ENCODE measurements at regions of chr3 and their contacts with region 1.

Region 1: DNA sequence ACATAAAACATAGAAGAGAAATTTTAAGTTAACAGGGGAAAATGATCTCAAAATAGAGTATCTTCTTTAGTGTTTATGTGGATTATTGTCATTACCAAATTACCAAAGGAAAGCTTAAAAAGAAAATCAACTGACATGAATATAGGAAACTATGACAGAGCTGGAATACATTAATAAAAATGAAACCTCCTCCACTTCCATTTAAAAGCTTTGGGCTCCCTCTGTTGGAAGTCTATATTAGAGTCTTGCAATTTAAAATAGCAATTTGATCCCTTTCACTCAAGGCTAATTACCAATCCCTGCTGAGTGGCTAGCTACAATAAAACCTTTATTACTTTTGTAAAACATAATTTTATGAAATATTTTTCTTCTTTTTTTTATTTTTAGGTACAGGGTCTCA is 61.4 kb upstream of the IMPG2 start:
- DNase-seq: no peak
- H3K4me3 Mint-ChIP-seq: no peak overlapping the region
- H3K27ac Mint-ChIP-seq: no peak overlapping the region
- H3K4me1 Mint-ChIP-seq: peaks cover 59% of the 10 kb centered on the region
- H3K27me3 Mint-ChIP-seq: no peaks in the 10 kb centered on the region

Region 2: DNA sequence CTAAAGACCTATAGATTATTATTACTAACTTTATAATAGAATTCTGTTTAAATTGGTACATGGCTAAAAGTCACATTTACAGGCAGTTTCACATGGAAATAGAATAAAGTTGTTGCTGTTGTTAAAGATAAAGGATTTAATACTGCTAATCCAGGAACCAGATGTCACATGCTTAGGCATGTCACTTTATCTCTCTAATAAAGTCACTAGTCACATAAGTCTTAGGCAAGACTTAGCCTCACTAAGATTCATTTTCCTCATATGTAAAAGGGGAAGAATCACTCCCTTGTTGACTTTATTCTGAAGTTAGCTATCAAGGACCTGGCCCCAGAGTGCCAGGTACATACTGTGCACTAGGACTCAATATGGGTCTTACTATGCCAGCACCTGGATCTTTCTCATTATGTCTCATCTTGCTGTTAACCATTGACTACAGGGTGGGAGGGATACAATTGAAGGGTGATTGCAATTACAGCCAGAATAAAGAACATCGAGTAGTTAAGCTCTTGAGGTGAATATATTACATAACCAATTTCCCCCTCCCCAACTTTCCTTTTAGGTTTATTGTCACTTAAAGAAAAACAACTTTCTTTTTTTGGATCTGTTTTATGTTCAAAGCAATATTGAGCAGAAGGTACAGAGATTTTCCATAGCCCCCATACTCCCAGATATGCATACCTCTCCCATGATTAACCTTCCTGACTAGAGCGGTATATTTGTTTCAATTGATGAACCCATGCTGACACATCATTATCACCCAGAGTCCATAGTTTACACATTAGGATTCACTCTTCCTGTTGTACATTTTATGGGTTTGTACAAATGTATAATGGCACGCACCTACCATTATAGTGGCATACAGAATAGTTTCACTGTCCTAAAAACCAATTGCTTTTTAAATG is 943.8 kb before region 1 on chr3:
- CTCF ChIA-PET with region 1: no interaction called
- intact Hi-C with region 1: no loop called
- DNase-seq: no peak
- H3K4me3 Mint-ChIP-seq: no peak overlapping the region
- H3K27ac Mint-ChIP-seq: no peak overlapping the region
- H3K4me1 Mint-ChIP-seq: peaks cover 8% of the 10 kb centered on the region
- H3K27me3 Mint-ChIP-seq: no peaks in the 10 kb centered on the region

Region 3: DNA sequence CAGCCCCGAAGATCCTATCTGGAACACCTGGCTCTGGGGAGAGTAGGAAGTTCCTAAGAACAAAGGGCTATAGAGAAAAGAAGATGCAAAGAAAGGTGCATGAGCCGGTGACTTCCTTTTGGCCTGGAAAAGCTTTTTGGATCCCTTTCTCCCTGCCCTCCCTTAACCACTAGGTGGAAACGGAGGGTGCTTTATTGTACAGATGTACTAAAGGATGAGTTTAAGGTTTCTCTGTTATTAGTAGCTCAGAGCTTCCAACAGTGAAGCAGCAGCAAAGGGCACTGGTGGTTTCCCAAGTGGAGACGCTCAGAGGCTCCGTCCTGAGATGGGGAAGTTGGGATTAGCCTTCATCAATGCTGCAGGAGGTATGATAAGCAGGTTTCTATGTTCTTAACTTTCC is 778.3 kb before region 1 on chr3:
- CTCF ChIA-PET with region 1: no interaction called
- intact Hi-C with region 1: loop called (anchors 2 kb)
- DNase-seq: no peak
- H3K4me3 Mint-ChIP-seq: peak overlapping the region; percentile 37
- H3K27ac Mint-ChIP-seq: no peak overlapping the region
- H3K4me1 Mint-ChIP-seq: peaks cover 25% of the 10 kb centered on the region
- H3K27me3 Mint-ChIP-seq: peaks cover 2% of the 10 kb centered on the region

Region 4: DNA sequence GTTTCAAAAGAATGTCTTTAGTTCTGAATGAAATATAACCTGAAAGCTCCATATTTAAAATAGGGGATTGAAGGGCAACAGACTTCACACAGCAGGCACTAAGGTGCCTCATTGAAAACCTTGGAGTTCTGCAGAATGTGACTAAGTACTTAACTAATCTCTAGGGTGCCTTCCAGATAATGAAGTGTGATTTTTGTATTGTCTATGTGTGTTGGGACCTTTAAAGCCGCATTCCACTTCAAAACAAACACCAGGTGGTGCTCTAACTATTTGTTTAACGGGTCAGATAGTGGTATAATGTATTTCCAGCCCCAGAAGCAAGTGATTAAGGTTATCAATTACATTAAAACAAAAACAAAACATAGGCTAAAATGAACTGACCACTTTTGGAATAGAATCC is 644.5 kb before region 1 on chr3:
- CTCF ChIA-PET with region 1: no interaction called
- intact Hi-C with region 1: loop called (anchors 5 kb)
- DNase-seq: no peak
- H3K4me3 Mint-ChIP-seq: no peak overlapping the region
- H3K27ac Mint-ChIP-seq: no peak overlapping the region
- H3K4me1 Mint-ChIP-seq: no peaks in the 10 kb centered on the region
- H3K27me3 Mint-ChIP-seq: no peaks in the 10 kb centered on the region

Region 5: GRCh38 chr3:101212730-101213129 is 169.1 kb before region 1 on chr3:
- CTCF ChIA-PET with region 1: no interaction called
- intact Hi-C with region 1: loop called (anchors 2 kb)
- DNase-seq: no peak
- H3K4me3 Mint-ChIP-seq: no peak overlapping the region
- H3K27ac Mint-ChIP-seq: no peak overlapping the region
- H3K4me1 Mint-ChIP-seq: no peaks in the 10 kb centered on the region
- H3K27me3 Mint-ChIP-seq: peaks cover 7% of the 10 kb centered on the region

Region 6: GRCh38 chr3:101635954-101636798 is 254.4 kb after region 1 on chr3:
- CTCF ChIA-PET with region 1: no interaction called
- intact Hi-C with region 1: loop called (anchors 1 kb)
- DNase-seq: peak; percentile 92
- H3K4me3 Mint-ChIP-seq: no peak overlapping the region
- H3K27ac Mint-ChIP-seq: no peak overlapping the region
- H3K4me1 Mint-ChIP-seq: no peaks in the 10 kb centered on the region
- H3K27me3 Mint-ChIP-seq: no peaks in the 10 kb centered on the region

Region 7: GRCh38 chr3:102053375-102053989 is 671.7 kb after region 1 on chr3:
- CTCF ChIA-PET with region 1: no interaction called
- intact Hi-C with region 1: no loop called
- DNase-seq: peak; percentile 56
- H3K4me3 Mint-ChIP-seq: no peak overlapping the region
- H3K27ac Mint-ChIP-seq: no peak overlapping the region
- H3K4me1 Mint-ChIP-seq: peaks cover 33% of the 10 kb centered on the region
- H3K27me3 Mint-ChIP-seq: no peaks in the 10 kb centered on the region

Region 8: DNA sequence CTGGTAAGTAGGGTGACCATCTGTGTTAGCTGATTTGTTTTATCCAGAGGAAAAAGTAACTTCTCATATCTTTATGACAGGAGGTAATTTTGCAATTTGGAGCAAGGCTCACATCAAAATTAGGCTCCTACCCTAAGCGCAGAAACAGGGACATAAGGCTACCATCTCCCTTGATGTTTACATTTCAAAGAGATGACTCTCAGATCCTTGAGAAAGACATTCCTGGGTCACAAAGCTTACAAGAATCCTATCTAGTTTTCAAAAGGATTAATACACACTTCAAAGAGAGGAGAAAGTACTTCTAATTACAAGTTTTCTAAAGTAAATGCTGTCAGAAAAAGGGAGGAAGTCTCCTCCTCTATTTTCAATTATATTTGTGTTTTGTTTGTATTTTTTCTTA is 1060.0 kb after region 1 on chr3:
- CTCF ChIA-PET with region 1: no interaction called
- intact Hi-C with region 1: no loop called
- DNase-seq: no peak
- H3K4me3 Mint-ChIP-seq: no peak overlapping the region
- H3K27ac Mint-ChIP-seq: no peak overlapping the region
- H3K4me1 Mint-ChIP-seq: no peaks in the 10 kb centered on the region
- H3K27me3 Mint-ChIP-seq: peaks cover 12% of the 10 kb centered on the region